Endothelial cell of umbilical vein (primary cell): ENCODE measurements at regions of chr16 and their contacts with region 1.

Region 1: GRCh38 chr16:53865494-53865863 is 161.5 kb downstream of the FTO start:
- DNase-seq: peak; percentile 73
- H3K4me3 ChIP-seq: no peak overlapping the region
- H3K27ac ChIP-seq: peak overlapping the region; percentile 58
- H3K4me1 ChIP-seq: peaks cover 25% of the 10 kb centered on the region
- H3K27me3 ChIP-seq: no peaks in the 10 kb centered on the region
- CTCF ChIP-seq: no peak
- POLR2A ChIP-seq: no peak

Region 2: DNA sequence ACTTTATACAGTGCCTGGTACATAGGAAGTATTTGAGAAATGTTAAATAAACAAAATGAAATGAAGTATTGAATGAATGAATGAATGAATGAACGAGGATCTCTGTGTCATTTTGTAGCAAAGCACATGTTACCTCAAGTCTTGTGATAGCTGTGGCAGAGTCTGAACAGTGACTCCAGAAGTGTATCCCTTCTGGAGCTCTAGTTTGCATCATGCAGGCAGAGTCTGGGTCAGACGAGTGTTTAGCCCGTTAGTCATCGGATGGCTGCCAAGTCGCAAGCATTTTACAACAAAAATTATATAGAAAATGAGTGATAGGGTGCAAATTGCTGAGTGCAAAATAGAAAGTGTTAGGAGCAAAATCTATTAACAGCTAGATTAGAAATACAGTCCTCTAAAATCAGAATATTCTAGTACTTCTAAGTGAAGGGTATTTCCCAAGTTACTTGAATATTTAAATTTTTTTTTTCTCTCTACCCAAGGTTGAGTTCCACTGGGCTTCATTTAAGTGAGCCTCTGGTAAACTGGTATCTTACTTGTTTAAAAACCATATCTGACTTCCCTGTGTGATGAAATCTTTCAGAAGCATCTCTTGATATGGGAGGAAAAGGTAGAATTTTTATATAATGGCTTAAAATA is 48.2 kb before region 1 on chr16:
- CTCF ChIA-PET with region 1: interaction called, 3 read pairs
- POLR2A ChIA-PET with region 1: no interaction called
- dilution Hi-C with region 1: no loop called
- intact Hi-C with region 1: loop called (anchors 5 kb)
- DNase-seq: peak; percentile 64
- H3K4me3 ChIP-seq: no peak overlapping the region
- H3K27ac ChIP-seq: no peak overlapping the region
- H3K4me1 ChIP-seq: no peaks in the 10 kb centered on the region
- H3K27me3 ChIP-seq: no peaks in the 10 kb centered on the region
- CTCF ChIP-seq: no peak
- POLR2A ChIP-seq: no peak

Region 3: DNA sequence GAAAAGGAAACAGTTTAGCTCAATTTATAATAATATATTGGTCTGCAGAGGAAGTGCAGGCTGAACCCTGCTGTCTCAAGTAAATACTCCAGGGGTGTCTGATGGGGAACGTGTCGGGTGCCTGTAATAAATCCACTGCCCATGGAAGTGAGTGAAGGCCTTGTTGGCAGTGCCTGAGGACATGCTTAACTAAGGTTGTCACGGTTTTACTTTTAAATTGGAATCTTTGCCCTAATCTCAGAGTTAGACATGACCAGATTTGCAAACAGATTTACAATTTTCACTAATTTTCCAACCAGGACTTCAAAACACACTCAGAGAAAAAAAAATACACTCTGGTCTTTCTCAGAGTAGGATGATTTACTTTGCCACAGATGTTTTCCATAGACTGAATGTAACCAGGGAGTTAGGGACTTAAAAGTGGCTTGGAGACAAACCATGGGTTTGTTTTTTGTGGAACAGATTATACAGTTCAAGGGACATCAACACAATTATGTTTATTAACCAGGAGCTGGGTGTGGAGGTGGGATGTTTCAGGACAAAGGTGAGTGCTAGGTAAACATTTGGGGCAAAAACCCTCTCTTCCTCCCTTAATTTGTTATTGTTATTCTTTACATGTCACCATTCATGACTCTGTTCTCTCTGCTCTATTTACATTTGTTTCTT is 17.1 kb before region 1 on chr16:
- CTCF ChIA-PET with region 1: no interaction called
- POLR2A ChIA-PET with region 1: no interaction called
- dilution Hi-C with region 1: no loop called
- intact Hi-C with region 1: no loop called
- DNase-seq: peak; percentile 41
- H3K4me3 ChIP-seq: no peak overlapping the region
- H3K27ac ChIP-seq: no peak overlapping the region
- H3K4me1 ChIP-seq: no peaks in the 10 kb centered on the region
- H3K27me3 ChIP-seq: no peaks in the 10 kb centered on the region
- CTCF ChIP-seq: no peak
- POLR2A ChIP-seq: no peak